ENCODE measurements at regions of chr6 and their contacts with region 1.

Region 1: GRCh38 chr6:1524040-1524480 is 85.7 kb upstream of the FOXC1 start:
- DNase-seq: peak; percentile 61 to 94
- H3K4me3 ChIP-seq: peak overlapping the region in 1 of 4 experiments; percentile 29; a peak in 1 of 8 replicates
- H3K27ac ChIP-seq: no peak overlapping the region
- H3K4me1 ChIP-seq: peaks cover 0 to 4% (median 3%) of the 10 kb centered on the region in 4 experiments; a peak in 5 of 7 replicates
- H3K27me3 ChIP-seq: peaks cover 4 to 48% (median 39%) of the 10 kb centered on the region in 4 experiments
- CTCF ChIP-seq: peak; percentile 67 to 84 (median 81)
- EP300 ChIP-seq: no peak
- POLR2A ChIP-seq: no peak
- RAD21 ChIP-seq: peak; percentile 73 to 84

Region 2: DNA sequence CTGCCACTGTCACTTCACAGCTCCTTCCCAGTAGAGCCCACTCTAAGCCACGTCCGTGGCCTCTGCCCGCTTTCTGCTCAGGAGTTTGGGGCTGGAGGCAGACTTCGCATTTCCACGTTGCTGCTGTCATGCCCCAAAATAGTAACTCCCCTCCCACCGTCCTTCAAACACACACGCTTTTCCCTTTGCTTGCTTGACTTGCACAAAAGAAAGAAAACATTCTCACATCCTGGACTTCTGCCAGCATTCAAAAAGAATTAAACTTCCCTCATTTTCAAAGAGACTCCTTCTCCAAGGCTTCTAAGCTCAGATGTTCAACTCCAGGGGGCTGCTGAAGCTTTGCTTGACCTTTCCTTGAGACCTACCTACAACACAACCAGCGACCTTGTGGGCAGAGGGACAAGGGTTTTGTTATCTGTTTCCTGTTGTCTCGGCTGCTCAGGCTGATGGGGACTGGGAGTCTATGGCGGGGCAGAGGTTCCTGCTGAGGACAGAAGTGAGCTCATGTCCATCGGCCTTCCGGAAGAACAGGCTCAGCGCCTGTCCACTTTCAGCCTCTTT is 476.0 kb before region 1 on chr6:
- CTCF ChIA-PET with region 1: no interaction called
- POLR2A ChIA-PET with region 1: no interaction called
- DNase-seq: no peak
- H3K4me3 ChIP-seq: no peak overlapping the region
- H3K27ac ChIP-seq: no peak overlapping the region
- H3K4me1 ChIP-seq: no peaks in the 10 kb centered on the region
- H3K27me3 ChIP-seq: no peaks in the 10 kb centered on the region
- CTCF ChIP-seq: no peak
- EP300 ChIP-seq: no peak
- POLR2A ChIP-seq: no peak
- RAD21 ChIP-seq: no peak

Region 3: DNA sequence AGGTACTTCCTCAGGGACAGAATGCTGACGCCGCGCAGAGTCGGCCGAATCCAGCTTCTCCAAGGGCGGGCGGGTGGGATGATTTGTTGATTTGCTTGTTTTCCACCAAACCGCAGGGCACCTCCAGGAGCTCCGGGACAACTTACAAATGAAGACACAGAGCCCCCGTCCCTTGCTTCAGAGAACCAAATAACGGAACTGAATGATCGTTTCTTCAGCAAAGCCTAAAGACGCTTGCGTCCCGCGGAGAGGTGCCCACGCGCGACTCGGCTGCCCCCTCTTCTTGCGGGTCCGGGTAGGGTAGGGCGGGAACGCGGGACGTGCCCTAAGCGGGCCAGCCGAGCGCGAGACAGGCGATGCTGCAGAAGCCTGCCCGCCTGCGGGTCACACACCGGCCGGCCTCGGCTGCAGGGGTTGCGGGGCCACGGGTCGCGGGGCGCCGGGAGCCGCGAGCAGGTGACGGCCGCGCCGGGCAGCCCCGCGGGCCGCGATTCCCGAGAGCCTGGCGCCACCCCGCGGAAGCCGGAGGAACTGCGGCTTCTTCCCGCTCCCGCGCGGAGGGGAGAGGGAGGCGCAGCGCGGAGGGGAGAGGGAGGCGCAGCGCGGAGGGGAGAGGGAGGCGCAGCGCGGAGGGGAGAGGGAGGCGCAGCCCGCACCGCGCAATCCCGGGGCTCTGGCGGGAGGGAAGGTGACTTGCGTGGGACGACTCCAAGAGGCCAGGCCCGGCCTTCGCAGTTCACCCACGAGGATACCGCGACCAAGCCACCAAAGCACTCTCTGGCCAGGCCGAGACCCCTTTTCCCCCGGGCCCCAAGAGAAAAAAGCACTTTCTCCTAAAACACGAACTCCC is 142.4 kb before region 1 on chr6:
- CTCF ChIA-PET with region 1: no interaction called
- POLR2A ChIA-PET with region 1: no interaction called
- DNase-seq: peak in 1 of 2 experiments; percentile 95
- H3K4me3 ChIP-seq: peak overlapping the region; percentile 1 to 63 (median 22); a peak in 4 of 8 replicates
- H3K27ac ChIP-seq: no peak overlapping the region
- H3K4me1 ChIP-seq: peaks cover 0 to 37% (median 17%) of the 10 kb centered on the region in 4 experiments; a peak in 5 of 7 replicates
- H3K27me3 ChIP-seq: peaks cover 94 to 100% (median 98%) of the 10 kb centered on the region in 4 experiments
- CTCF ChIP-seq: peak in 2 of 3 experiments; percentile 73 to 78; a peak in 3 of 4 replicates
- EP300 ChIP-seq: no peak
- POLR2A ChIP-seq: no peak
- RAD21 ChIP-seq: peak; percentile 75 to 88

Region 4: DNA sequence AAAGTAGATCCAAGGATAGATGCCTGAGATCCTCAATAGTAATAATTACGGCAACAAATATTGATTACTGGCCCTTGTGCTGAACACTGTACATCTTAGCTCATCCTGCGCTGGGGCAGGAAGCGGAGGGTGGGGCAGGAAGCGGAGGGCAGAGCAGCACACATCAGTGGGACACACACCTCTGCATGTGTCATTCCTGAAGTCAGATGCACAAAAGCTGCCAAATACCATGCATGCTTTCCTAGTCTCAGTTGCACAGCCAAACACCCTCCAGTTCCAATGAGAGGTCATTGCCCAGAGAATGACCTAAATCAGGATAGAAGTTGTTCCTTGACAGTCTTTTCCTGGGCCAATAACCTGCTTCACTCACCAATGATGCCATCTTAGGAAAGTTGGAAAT is 11.2 kb after region 1 on chr6:
- CTCF ChIA-PET with region 1: interaction called, 10 read pairs
- POLR2A ChIA-PET with region 1: no interaction called
- DNase-seq: no peak
- H3K4me3 ChIP-seq: no peak overlapping the region
- H3K27ac ChIP-seq: no peak overlapping the region
- H3K4me1 ChIP-seq: no peaks in the 10 kb centered on the region; a peak in 1 of 7 replicates
- H3K27me3 ChIP-seq: no peaks in the 10 kb centered on the region; a peak in 1 of 7 replicates
- CTCF ChIP-seq: no peak
- EP300 ChIP-seq: no peak
- POLR2A ChIP-seq: no peak
- RAD21 ChIP-seq: no peak